Heart left ventricle (tissue), 16 donors: ENCODE measurements at regions of chr9 and their contacts with region 1.

Region 1: GRCh38 chr9:92349771-92350739 is 24.3 kb downstream of the CENPP start:
- DNase-seq: no peak
- ATAC-seq: peak in 3 of 4 donors; percentile 42 to 72 (median 65)
- H3K4me3 ChIP-seq: peak overlapping the region in 1 of 12 donors; percentile 10
- H3K27ac ChIP-seq: peak overlapping the region; percentile 10 to 86 (median 63)
- H3K4me1 ChIP-seq: peaks cover 0 to 16% (median 1%) of the 10 kb centered on the region in 12 donors
- H3K27me3 ChIP-seq: no peaks in the 10 kb centered on the region
- CTCF ChIP-seq: no peak
- POLR2A ChIP-seq: no peak

Region 2: DNA sequence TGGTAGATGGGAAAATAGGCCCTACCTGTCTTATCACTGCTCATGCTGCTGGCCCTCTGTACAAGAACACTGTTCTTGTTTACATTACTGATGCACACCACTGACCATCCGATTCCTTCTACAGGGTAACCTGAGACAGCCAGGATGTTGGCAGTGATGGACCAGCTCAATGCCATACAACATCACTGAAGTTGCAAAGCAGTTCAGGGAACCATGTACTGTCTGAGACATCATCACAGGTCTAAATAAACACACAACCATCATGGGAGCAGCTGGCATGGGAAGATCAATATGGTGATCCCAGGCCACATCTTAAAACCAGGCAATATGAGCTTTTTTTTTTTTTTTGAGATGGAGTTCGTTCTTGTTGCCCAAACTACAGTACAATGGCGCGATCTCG is 115.5 kb before region 1 on chr9:
- intact Hi-C with region 1: no loop called
- DNase-seq: no peak
- ATAC-seq: no peak
- H3K4me3 ChIP-seq: no peak overlapping the region
- H3K27ac ChIP-seq: no peak overlapping the region
- H3K4me1 ChIP-seq: no peaks in the 10 kb centered on the region
- H3K27me3 ChIP-seq: no peaks in the 10 kb centered on the region
- CTCF ChIP-seq: no peak
- POLR2A ChIP-seq: no peak

Region 3: GRCh38 chr9:92332577-92333281 is 17.3 kb before region 1 on chr9:
- intact Hi-C with region 1: no loop called
- DNase-seq: peak in 3 of 5 donors; percentile 10 to 38 (median 26)
- ATAC-seq: peak; percentile 62 to 89 (median 78)
- H3K4me3 ChIP-seq: no peak overlapping the region
- H3K27ac ChIP-seq: peak overlapping the region in 10 of 12 donors; percentile 18 to 82 (median 48)
- H3K4me1 ChIP-seq: peaks cover 0 to 15% (median 0%) of the 10 kb centered on the region in 12 donors
- H3K27me3 ChIP-seq: no peaks in the 10 kb centered on the region
- CTCF ChIP-seq: no peak
- POLR2A ChIP-seq: no peak

Region 4: GRCh38 chr9:92384375-92384774 is 34.3 kb after region 1 on chr9:
- intact Hi-C with region 1: no loop called
- DNase-seq: no peak
- ATAC-seq: no peak
- H3K4me3 ChIP-seq: no peak overlapping the region
- H3K27ac ChIP-seq: peak overlapping the region in 4 of 12 donors; percentile 23 to 70 (median 30)
- H3K4me1 ChIP-seq: peaks cover 0 to 9% (median 0%) of the 10 kb centered on the region in 12 donors
- H3K27me3 ChIP-seq: no peaks in the 10 kb centered on the region
- CTCF ChIP-seq: no peak
- POLR2A ChIP-seq: no peak

Region 5: DNA sequence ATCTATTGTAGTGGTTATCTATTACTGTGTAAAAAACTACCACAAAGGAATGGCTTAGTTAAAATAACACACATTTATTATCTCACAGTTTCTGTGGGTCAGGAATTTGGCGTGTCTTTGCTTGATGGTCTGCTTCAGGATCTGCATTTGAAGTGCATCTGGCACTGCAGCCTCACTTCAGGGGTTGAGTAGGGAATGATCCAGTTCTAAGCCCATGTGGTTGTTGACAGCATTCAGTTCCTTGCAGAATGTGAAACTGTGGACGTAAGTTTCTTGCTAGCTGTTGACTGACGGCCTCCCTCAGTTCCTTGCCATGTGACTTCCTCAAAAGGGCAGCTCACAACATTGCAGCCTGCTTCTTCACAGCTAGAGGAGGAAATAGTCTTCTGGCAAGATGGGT is 56.4 kb after region 1 on chr9:
- intact Hi-C with region 1: no loop called
- DNase-seq: peak in 3 of 5 donors; percentile 44 to 46 (median 44)
- ATAC-seq: peak; percentile 49 to 90 (median 75)
- H3K4me3 ChIP-seq: peak overlapping the region in 6 of 12 donors; percentile 4 to 47 (median 23)
- H3K27ac ChIP-seq: peak overlapping the region in 9 of 12 donors; percentile 20 to 80 (median 41)
- H3K4me1 ChIP-seq: peaks cover 0 to 29% (median 0%) of the 10 kb centered on the region in 12 donors
- H3K27me3 ChIP-seq: no peaks in the 10 kb centered on the region
- CTCF ChIP-seq: no peak
- POLR2A ChIP-seq: peak in 1 of 2 donors; percentile 18

Region 6: DNA sequence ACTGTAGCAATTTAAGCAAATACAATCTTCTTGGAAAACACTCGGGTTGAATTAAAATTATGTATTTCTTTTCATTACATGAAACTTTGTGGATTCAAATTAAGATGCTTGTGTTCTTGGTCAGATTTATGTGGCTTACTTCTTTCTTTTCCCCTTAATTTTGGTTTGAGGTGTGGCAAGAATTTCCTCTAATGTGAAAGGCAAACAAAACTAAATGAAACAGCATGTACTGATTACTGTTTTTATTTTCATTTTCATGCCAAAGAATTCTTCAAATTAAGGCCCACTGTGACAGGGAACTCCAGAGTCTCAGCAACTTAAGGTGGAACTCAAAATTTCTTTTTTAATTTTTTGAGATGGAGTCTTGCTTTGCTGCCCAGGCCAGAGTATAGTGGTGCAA is 74.3 kb after region 1 on chr9 and contains the start of gene OMD:
- intact Hi-C with region 1: loop called in 1 of 10 experiments (anchors 5 kb)
- DNase-seq: no peak
- ATAC-seq: peak in 3 of 4 donors; percentile 46 to 57 (median 55)
- H3K4me3 ChIP-seq: peak within 1 kb of the TSS in 10 of 12 donors; percentile 7 to 53 (median 27)
- H3K27ac ChIP-seq: peak within 1 kb of the TSS; percentile 3 to 63 (median 25)
- H3K4me1 ChIP-seq: peaks cover 0 to 26% (median 0%) of the 10 kb centered on the region in 12 donors
- H3K27me3 ChIP-seq: no peaks in the 10 kb centered on the region
- CTCF ChIP-seq: no peak
- POLR2A ChIP-seq: no peak
- total RNA-seq, gene OMD: 2.3 to 10.2 (median 5.9) TPM